ENCODE measurements at regions of chrX and their contacts with region 1.

Region 1: DNA sequence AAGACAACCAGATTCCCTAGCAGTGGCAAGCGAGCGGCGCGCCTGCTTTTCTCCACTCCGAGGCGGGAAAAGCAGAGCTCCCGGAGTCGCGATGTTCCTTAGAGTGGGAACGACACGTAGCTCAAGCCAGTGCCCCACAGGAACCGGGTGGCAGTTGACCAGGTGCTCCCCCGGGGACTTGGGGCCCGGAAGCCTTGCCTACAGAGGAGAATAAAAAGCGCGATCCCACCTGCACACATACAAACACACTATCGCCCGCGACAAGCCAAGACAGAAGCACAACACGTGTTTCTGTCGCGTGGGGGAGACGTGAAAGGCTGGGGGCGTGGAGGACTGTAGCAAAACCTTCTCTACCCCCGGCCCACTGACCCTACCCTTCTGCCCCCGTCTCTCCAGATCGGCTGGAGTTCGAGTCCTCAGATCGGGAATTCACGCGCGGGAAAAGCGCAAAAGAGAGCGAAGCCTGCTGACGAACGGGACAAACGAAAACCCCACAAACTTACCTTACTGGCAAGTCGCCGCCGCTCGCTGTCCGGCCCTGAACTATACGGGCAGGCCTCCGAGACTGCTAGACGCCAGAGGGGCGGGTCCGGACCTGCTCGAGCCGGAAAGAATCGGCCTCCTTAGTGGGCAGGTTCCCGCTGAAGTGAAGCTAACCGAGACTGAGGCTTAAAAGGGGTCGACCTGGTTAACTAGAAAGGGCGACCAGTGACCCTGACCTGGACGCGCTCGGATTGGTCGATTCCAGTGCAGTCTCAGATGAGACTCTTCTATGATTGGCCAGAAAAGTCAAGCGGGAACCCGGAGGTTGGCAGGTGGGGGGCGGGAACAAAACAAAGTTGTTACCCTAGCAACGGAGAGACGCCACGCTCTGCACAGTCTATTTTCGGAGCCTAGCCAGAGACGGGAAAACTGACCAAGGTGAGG is at the starts of genes DNAAF6 and NUP62CL:
- DNase-seq: peak in 1 of 2 donors; percentile 16
- H3K4me3 ChIP-seq: peak within 1 kb of the TSS; percentile 6
- CTCF ChIP-seq: no peak
- POLR2A ChIP-seq: no peak
- total RNA-seq, gene DNAAF6: not detected
- total RNA-seq, gene NUP62CL: 1.3 to 4.2 (median 2.6) TPM

Region 2: DNA sequence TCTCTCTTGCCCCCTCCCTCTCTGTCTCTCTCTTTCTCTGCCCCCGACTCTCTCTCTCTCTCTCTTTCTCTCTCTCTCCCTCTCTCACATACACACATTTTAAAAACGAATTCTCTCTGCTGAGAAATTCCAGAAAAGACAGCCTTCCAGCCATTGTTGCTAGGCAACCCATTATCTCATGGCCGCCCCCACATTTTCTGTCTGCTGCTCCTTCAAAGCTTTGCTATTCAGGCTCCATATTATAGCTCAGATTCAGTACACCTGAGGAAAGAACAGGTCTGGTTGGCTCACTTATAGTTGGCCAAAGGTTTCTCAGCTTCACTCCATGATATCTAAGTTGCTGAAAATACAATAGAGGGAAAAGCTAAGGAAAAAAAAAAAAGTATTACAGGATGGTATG is 768.6 kb before region 1 on chrX:
- intact Hi-C with region 1: loop called (anchors 5 kb)
- DNase-seq: no peak
- H3K4me3 ChIP-seq: no peak overlapping the region
- CTCF ChIP-seq: no peak
- POLR2A ChIP-seq: no peak

Region 3: GRCh38 chrX:107014936-107015335 is 191.1 kb before region 1 on chrX:
- intact Hi-C with region 1: no loop called
- DNase-seq: no peak
- H3K4me3 ChIP-seq: no peak overlapping the region
- CTCF ChIP-seq: no peak
- POLR2A ChIP-seq: no peak

Measured in lower leg skin (tissue), 4 donors.